ENCODE measurements at regions of chr1 and their contacts with region 1.

Region 1: GRCh38 chr1:202160377-202160940 is at the start of gene PTPN7:
- DNase-seq: peak; percentile 64
- ATAC-seq: peak; percentile 60
- H3K4me3 Mint-ChIP-seq: peak within 1 kb of the TSS; percentile 91
- H3K27ac Mint-ChIP-seq: peak within 1 kb of the TSS; percentile 92
- H3K4me1 Mint-ChIP-seq: peaks cover 83% of the 10 kb centered on the region
- H3K27me3 Mint-ChIP-seq: no peaks in the 10 kb centered on the region
- CTCF ChIP-seq: no peak
- total RNA-seq, gene PTPN7: 29.4 and 31.0 TPM in 2 replicates

Region 2: GRCh38 chr1:201982623-201983379 is 177.7 kb before region 1 on chr1 and contains the start of gene RNPEP:
- CTCF ChIA-PET with region 1: no interaction called
- POLR2A ChIA-PET with region 1: no interaction called
- intact Hi-C with region 1: no loop called
- DNase-seq: peak; percentile 60
- ATAC-seq: peak; percentile 77
- H3K4me3 Mint-ChIP-seq: peak within 1 kb of the TSS; percentile 94
- H3K27ac Mint-ChIP-seq: peak within 1 kb of the TSS; percentile 81
- H3K4me1 Mint-ChIP-seq: peaks cover 19% of the 10 kb centered on the region
- H3K27me3 Mint-ChIP-seq: no peaks in the 10 kb centered on the region
- CTCF ChIP-seq: no peak
- total RNA-seq, gene RNPEP: 37.3 and 38.3 TPM in 2 replicates

Region 3: GRCh38 chr1:202135221-202135721 is 25.2 kb before region 1 on chr1:
- CTCF ChIA-PET with region 1: interaction called, 9 read pairs
- POLR2A ChIA-PET with region 1: interaction called, 13 read pairs
- intact Hi-C with region 1: no loop called
- DNase-seq: peak; percentile 40
- ATAC-seq: peak; percentile 97
- H3K4me3 Mint-ChIP-seq: no peak overlapping the region
- H3K27ac Mint-ChIP-seq: no peak overlapping the region
- H3K4me1 Mint-ChIP-seq: peaks cover 4% of the 10 kb centered on the region
- H3K27me3 Mint-ChIP-seq: no peaks in the 10 kb centered on the region
- CTCF ChIP-seq: peak; percentile 49

Region 4: DNA sequence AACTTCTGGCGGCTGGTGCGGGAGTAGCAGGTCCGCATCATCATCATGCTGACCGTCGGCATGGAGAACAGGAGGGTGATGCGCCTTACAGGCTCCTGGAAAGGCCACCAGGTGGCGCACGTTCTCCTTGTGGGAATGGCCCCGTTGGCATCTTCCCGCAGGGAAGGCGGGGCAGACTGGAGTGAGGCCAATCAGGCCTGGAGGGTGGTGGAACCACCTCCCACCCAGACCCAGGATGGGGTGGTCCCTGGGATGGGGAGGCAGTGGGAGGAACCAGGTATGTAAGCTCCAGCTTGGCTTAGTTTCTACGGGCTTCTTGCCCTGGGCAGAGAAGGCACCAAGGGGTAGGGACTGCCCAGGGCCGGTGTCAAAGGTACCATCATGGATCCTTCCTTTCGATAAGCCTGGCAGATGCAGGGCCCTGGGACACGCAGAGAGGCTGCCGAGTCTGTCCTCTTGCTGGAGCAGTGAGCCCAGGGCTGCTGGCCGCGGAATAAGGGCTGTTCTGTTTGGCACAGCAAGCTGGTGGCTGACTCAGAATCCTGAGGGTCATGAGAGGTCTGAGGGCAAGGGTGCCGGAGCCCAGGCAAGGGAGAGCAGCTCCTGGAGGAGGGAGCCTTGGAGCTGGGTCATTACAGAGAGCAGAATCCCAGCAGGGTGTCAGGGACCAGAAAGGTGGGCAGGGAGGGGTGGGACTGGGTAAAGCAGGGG is 24.4 kb after region 1 on chr1:
- CTCF ChIA-PET with region 1: interaction called, 13 read pairs
- POLR2A ChIA-PET with region 1: interaction called, 3 read pairs
- intact Hi-C with region 1: loop called (anchors 2 kb)
- DNase-seq: peak; percentile 55
- ATAC-seq: peak; percentile 65
- H3K4me3 Mint-ChIP-seq: no peak overlapping the region
- H3K27ac Mint-ChIP-seq: no peak overlapping the region
- H3K4me1 Mint-ChIP-seq: peaks cover 3% of the 10 kb centered on the region
- H3K27me3 Mint-ChIP-seq: peaks cover 32% of the 10 kb centered on the region
- CTCF ChIP-seq: no peak

Region 5: GRCh38 chr1:202615501-202616354 is 455.3 kb after region 1 on chr1:
- CTCF ChIA-PET with region 1: no interaction called
- POLR2A ChIA-PET with region 1: no interaction called
- intact Hi-C with region 1: loop called (anchors 10 kb)
- DNase-seq: no peak
- ATAC-seq: peak; percentile 82
- H3K4me3 Mint-ChIP-seq: peak overlapping the region; percentile 77
- H3K27ac Mint-ChIP-seq: peak overlapping the region; percentile 64
- H3K4me1 Mint-ChIP-seq: peaks cover 50% of the 10 kb centered on the region
- H3K27me3 Mint-ChIP-seq: peaks cover 4% of the 10 kb centered on the region
- CTCF ChIP-seq: no peak

Region 6: DNA sequence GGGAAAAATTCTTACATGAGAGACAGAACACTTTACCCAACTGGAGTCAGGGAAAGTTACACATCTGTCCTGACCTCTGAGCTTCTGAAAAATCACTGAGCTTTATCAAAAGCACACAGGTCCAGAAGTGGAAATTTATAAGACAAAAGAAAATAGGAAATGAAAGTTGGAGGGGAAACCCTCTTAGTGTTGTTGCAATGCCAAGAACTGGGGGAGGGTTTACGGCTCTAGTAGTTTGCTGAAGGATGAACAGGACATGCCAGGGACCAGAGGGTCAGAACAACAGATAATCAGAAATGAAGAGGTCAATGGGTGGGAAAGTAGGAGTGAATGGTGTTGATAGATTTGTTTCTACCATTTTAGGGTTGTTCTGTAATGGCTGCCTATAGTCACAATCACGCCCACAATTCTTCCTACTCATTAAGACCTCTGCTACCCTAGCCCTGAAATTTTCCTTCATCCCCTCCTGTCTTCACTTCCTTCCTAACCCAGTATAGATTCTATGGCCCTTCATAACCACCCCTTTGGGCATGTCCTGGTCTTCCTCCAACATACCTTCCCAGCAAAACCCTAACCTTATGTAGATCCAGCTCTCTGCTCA is 1220.8 kb after region 1 on chr1:
- CTCF ChIA-PET with region 1: no interaction called
- POLR2A ChIA-PET with region 1: no interaction called
- intact Hi-C with region 1: loop called (anchors 10 kb)
- DNase-seq: no peak
- ATAC-seq: peak; percentile 89
- H3K4me3 Mint-ChIP-seq: peak overlapping the region; percentile 59
- H3K27ac Mint-ChIP-seq: peak overlapping the region; percentile 88
- H3K4me1 Mint-ChIP-seq: peaks cover 53% of the 10 kb centered on the region
- H3K27me3 Mint-ChIP-seq: no peaks in the 10 kb centered on the region
- CTCF ChIP-seq: no peak